MCF 10A (cell line): ENCODE measurements at regions of chrX and their contacts with region 1.

Region 1: DNA sequence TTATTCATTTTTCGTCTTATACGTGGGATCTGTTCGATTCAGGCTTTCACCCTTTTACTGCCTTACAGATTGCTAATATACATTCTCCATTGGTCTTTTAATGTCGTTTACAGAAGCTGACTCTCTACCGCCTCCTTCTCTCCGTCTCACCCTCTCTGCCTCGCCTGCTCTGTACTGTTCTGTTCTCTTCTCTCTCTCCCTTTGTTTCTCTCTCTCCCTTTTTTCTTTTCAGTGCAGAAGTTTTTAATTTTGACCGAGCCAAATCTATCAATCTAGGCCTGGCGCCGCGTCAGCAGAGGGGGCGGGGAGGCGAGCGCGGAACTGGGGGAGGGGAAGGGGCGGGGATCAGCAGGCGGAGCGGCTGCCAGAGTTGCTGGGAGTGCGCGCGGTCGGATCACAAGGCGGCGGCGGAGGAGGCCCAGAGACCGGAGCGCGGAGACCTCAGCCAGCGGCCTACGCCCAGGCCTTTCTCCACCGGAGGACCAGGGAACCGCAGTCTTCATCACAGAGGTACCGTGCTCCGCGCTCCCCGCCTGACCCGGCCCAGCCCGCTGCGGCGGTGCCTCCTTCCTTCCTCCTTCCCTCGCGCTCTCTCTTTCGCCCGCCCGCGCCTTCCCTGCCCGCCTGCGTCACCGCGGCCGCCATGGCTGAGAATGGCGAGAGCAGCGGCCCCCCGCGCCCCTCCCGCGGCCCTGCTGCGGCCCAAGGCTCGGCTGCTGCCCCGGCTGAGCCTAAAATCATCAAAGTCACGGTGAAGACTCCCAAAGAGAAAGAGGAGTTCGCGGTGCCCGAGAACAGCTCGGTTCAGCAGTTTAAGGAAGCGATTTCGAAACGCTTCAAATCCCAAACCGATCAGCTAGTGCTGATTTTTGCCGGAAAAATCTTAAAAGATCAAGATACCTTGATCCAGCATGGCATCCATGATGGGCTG is at the start of gene UBQLN2:
- DNase-seq: peak; percentile 71
- H3K4me3 Mint-ChIP-seq: peak within 1 kb of the TSS; percentile 72
- H3K27ac Mint-ChIP-seq: peak within 1 kb of the TSS; percentile 67
- H3K4me1 Mint-ChIP-seq: no peaks in the 10 kb centered on the region
- H3K27me3 Mint-ChIP-seq: peaks cover 14% of the 10 kb centered on the region
- CTCF ChIP-seq: no peak
- total RNA-seq, gene UBQLN2: 18.0 and 18.9 TPM in 2 replicates

Region 2: DNA sequence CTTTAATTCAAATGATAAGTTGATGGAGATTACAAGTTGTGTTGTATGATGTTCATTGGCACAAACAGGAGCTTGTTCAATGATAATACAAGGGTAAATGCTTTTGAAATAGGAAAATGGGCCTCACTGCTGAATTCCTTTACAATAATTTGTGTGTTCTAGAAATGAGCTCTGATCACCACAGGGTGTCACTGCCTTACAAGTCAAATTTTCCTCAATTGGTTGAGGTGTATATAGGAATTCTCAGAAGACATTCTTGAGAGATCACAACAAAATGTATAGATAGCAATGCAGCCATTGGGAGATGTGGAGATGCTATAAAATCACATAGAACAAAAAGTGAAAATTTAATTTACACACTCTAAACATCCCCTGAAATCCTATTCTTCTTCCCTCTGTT is 281.7 kb before region 1 on chrX:
- CTCF ChIA-PET with region 1: no interaction called
- POLR2A ChIA-PET with region 1: no interaction called
- intact Hi-C with region 1: loop called (anchors 10 kb)
- DNase-seq: peak; percentile 33
- H3K4me3 Mint-ChIP-seq: no peak overlapping the region
- H3K27ac Mint-ChIP-seq: no peak overlapping the region
- H3K4me1 Mint-ChIP-seq: no peaks in the 10 kb centered on the region
- H3K27me3 Mint-ChIP-seq: peaks cover 60% of the 10 kb centered on the region
- CTCF ChIP-seq: peak; percentile 34

Region 3: DNA sequence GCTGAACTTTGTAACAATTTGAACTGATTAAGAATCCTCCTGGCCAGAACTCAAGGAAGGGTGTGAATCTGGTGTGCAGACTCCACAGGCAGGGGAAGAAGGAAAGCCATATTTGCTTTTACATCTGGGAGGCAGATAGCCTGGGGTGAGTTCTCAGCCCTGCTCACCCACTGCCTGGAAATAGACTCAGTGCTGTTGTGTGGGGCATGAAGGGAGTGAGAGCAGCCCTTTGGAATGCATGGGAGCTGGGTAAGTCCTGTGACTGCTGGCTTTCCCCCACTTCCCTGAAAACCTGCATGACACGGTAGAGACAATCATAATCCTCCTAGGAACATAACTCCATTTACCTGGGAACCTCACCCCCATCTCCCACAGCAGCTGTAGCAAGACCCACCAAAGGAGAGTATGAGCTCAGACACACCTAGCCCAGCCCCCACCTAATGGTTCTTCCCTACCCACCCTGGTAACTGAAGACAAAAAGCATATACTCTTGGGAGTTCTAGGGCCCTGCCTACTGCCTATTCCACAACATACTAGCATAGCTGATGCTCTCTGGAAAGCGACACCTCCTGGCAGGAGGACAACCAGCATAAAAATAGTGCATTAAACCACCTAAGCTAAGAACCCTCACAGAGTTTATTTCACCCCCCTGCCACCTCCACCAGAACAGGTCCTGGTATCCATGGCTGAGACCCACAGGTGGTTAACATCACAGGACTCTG is 59.4 kb before region 1 on chrX:
- CTCF ChIA-PET with region 1: interaction called, 3 read pairs
- POLR2A ChIA-PET with region 1: interaction called, 12 read pairs
- intact Hi-C with region 1: no loop called
- DNase-seq: peak; percentile 58
- H3K4me3 Mint-ChIP-seq: no peak overlapping the region
- H3K27ac Mint-ChIP-seq: peak overlapping the region; percentile 92
- H3K4me1 Mint-ChIP-seq: peaks cover 31% of the 10 kb centered on the region
- H3K27me3 Mint-ChIP-seq: peaks cover 64% of the 10 kb centered on the region
- CTCF ChIP-seq: peak; percentile 9